Transverse colon (tissue), 4 donors: ENCODE measurements at regions of chrX and their contacts with region 1.

Region 1: DNA sequence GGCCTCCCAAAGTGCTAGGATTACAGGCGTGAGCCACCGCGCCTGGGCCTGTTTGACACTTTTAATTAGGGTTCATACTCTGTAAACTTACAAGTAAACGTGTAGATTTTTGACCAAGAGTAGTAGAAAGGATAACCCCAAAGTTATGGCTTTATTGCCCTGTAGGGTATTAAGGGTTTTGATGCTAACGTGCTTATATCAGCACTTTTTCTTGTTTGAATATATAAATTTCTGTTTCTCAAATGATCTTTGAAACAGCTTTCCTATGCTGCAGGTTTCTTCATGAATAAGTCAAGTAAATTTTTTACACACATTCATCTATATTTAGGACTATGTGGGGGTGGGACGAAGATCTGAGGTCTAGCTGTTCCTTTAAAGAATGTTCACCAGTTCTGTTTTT is 29.3 kb upstream of the REPS2 start:
- DNase-seq: no peak
- H3K4me3 ChIP-seq: no peak overlapping the region
- H3K27ac ChIP-seq: no peak overlapping the region
- H3K4me1 ChIP-seq: no peaks in the 10 kb centered on the region
- H3K27me3 ChIP-seq: no peaks in the 10 kb centered on the region
- CTCF ChIP-seq: no peak
- EP300 ChIP-seq: no peak
- POLR2A ChIP-seq: no peak

Region 2: GRCh38 chrX:17425136-17425535 is 508.0 kb after region 1 on chrX:
- in situ Hi-C with region 1: no loop called
- intact Hi-C with region 1: no loop called
- DNase-seq: no peak
- H3K4me3 ChIP-seq: no peak overlapping the region
- H3K27ac ChIP-seq: no peak overlapping the region
- H3K4me1 ChIP-seq: no peaks in the 10 kb centered on the region
- H3K27me3 ChIP-seq: no peaks in the 10 kb centered on the region
- CTCF ChIP-seq: no peak
- EP300 ChIP-seq: no peak
- POLR2A ChIP-seq: no peak

Region 3: DNA sequence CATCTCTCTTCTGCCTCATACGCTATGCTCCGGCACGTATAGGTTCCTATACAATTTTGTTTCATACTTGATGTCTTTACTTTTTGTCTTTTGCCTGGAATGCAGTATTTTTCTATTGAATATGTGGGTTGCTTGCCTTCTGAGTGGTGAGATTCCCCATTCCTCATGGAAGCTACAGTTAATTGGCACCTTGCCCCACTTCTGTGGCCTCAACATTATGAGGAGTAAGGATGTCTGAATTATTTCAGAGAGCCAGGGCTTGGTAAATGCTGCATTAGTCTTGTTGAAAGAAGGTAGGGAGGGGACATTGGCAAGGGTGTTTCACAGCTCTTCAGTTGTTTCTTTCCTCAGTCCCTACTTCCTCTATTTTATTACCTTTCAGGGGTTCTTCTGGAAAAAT is 1531.3 kb after region 1 on chrX:
- in situ Hi-C with region 1: no loop called
- intact Hi-C with region 1: loop called (anchors 5 kb)
- DNase-seq: no peak
- H3K4me3 ChIP-seq: no peak overlapping the region
- H3K27ac ChIP-seq: no peak overlapping the region
- H3K4me1 ChIP-seq: no peaks in the 10 kb centered on the region
- H3K27me3 ChIP-seq: no peaks in the 10 kb centered on the region
- CTCF ChIP-seq: no peak
- EP300 ChIP-seq: no peak
- POLR2A ChIP-seq: no peak